GM12878 (cell line): ENCODE measurements at regions of chr21 and their contacts with region 1.

Region 1: DNA sequence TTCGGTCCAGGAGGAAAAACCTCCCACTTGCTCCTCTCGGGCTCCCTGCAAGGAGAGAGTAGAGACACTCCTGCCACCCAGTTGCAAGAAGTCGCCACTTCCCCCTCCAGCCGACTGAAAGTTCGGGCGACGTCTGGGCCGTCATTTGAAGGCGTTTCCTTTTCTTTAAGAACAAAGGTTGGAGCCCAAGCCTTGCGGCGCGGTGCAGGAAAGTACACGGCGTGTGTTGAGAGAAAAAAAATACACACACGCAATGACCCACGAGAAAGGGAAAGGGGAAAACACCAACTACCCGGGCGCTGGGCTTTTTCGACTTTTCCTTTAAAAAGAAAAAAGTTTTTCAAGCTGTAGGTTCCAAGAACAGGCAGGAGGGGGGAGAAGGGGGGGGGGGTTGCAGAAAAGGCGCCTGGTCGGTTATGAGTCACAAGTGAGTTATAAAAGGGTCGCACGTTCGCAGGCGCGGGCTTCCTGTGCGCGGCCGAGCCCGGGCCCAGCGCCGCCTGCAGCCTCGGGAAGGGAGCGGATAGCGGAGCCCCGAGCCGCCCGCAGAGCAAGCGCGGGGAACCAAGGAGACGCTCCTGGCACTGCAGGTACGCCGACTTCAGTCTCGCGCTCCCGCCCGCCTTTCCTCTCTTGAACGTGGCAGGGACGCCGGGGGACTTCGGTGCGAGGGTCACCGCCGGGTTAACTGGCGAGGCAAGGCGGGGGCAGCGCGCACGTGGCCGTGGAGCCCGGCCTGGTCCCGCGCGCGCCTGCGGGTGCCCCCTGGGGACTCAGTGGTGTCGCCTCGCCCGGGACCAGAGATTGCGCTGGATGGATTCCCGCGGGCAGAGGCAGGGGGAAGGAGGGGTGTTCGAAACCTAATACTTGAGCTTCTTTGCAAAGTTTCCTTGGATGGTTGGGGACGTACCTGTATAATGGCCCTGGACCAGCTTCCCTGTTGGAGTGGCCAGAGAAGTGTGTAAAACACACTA is 45.3 kb downstream of the MRPL39 start:
- DNase-seq: peak; percentile 66
- ATAC-seq: peak; percentile 57
- H3K4me3 ChIP-seq: peak overlapping the region; percentile 87
- H3K27ac ChIP-seq: peak overlapping the region; percentile 92
- H3K4me1 ChIP-seq: peaks cover 10% of the 10 kb centered on the region
- H3K27me3 ChIP-seq: no peaks in the 10 kb centered on the region
- CTCF ChIP-seq: peak in 1 of 3 experiments; percentile 10; a peak in 2 of 6 replicates
- EP300 ChIP-seq: 0 out of 4 replicates have a peak, but pooled peaks have one; percentile 6 to 10
- POLR2A ChIP-seq: peak; percentile 96
- RAD21 ChIP-seq: peak; percentile 49

Region 2: GRCh38 chr21:25176637-25177412 is 385.1 kb before region 1 on chr21:
- CTCF ChIA-PET with region 1: no interaction called
- POLR2A ChIA-PET with region 1: no interaction called
- RAD21 ChIA-PET with region 1: no interaction called
- SMC1A ChIA-PET with region 1: no interaction called
- in situ Hi-C with region 1: no loop called
- intact Hi-C with region 1: loop called (anchors 10 kb)
- DNase-seq: peak; percentile 87
- ATAC-seq: peak; percentile 92
- H3K4me3 ChIP-seq: no peak overlapping the region
- H3K27ac ChIP-seq: peak overlapping the region; percentile 58; the same call in 1 of the 2 replicates
- H3K4me1 ChIP-seq: peaks cover 12% of the 10 kb centered on the region
- H3K27me3 ChIP-seq: no peaks in the 10 kb centered on the region
- CTCF ChIP-seq: no peak
- EP300 ChIP-seq: peak; percentile 95 to 97
- POLR2A ChIP-seq: no peak
- RAD21 ChIP-seq: no peak

Region 3: GRCh38 chr21:25457411-25457810 is 104.5 kb before region 1 on chr21:
- CTCF ChIA-PET with region 1: interaction called, 5 read pairs
- POLR2A ChIA-PET with region 1: interaction called, 4 read pairs
- RAD21 ChIA-PET with region 1: interaction called, 6 read pairs
- SMC1A ChIA-PET with region 1: interaction called, 8 read pairs
- in situ Hi-C with region 1: no loop called
- intact Hi-C with region 1: loop called (anchors 1 kb)
- DNase-seq: peak; percentile 83
- ATAC-seq: peak; percentile 60
- H3K4me3 ChIP-seq: no peak overlapping the region
- H3K27ac ChIP-seq: peak overlapping the region; percentile 98
- H3K4me1 ChIP-seq: peaks cover 52% of the 10 kb centered on the region
- H3K27me3 ChIP-seq: no peaks in the 10 kb centered on the region
- CTCF ChIP-seq: no peak
- EP300 ChIP-seq: peak; percentile 100
- POLR2A ChIP-seq: no peak
- RAD21 ChIP-seq: peak; percentile 25; the same call in 1 of the 2 replicates

Region 4: DNA sequence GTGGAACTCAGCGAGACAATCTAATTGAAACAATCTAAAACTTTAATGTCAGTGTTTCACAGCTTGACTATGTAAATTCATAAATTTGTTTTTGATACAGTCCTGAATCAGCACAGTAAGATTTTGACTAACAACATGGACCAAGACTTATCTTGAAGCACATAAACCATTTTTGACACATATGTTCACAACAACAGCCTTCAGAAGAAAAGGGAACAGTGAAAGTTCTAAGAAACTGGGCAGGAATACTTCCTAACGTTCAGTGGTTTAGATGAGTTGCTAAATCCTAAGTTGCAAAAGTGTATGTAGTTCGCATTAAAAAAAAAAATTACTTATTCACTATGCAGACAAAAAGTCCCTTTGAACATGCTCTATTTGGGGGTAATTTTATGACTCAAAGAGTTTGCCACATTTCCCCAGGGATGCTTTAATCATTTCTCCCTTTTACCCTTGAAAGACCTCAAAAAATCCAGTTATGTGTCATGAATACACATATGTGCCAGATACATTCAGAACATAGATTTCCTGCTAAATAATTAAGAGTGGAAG is 74.8 kb before region 1 on chr21:
- CTCF ChIA-PET with region 1: interaction called, 4 read pairs
- POLR2A ChIA-PET with region 1: interaction called, 3 read pairs
- RAD21 ChIA-PET with region 1: interaction called, 12 read pairs
- SMC1A ChIA-PET with region 1: interaction called, 17 read pairs
- in situ Hi-C with region 1: no loop called
- intact Hi-C with region 1: loop called (anchors 1 kb)
- DNase-seq: peak; percentile 96
- ATAC-seq: peak; percentile 80
- H3K4me3 ChIP-seq: peak overlapping the region; percentile 11
- H3K27ac ChIP-seq: peak overlapping the region; percentile 85
- H3K4me1 ChIP-seq: peaks cover 46% of the 10 kb centered on the region
- H3K27me3 ChIP-seq: no peaks in the 10 kb centered on the region
- CTCF ChIP-seq: no peak
- EP300 ChIP-seq: peak; percentile 97 to 98
- POLR2A ChIP-seq: no peak
- RAD21 ChIP-seq: peak; percentile 37; the same call in 1 of the 2 replicates

Region 5: GRCh38 chr21:25507522-25507921 is 54.4 kb before region 1 on chr21:
- CTCF ChIA-PET with region 1: interaction called, 4 read pairs
- POLR2A ChIA-PET with region 1: interaction called, 18 read pairs
- RAD21 ChIA-PET with region 1: interaction called, 12 read pairs
- SMC1A ChIA-PET with region 1: interaction called, 13 read pairs
- in situ Hi-C with region 1: loop called (anchors 10 kb)
- intact Hi-C with region 1: loop called (anchors 1 kb)
- DNase-seq: no peak
- ATAC-seq: peak; percentile 57
- H3K4me3 ChIP-seq: no peak overlapping the region
- H3K27ac ChIP-seq: peak overlapping the region; percentile 95
- H3K4me1 ChIP-seq: peaks cover 41% of the 10 kb centered on the region
- H3K27me3 ChIP-seq: no peaks in the 10 kb centered on the region
- CTCF ChIP-seq: peak; percentile 19 to 52 (median 31); a peak in 4 of 6 replicates
- EP300 ChIP-seq: no peak
- POLR2A ChIP-seq: no peak
- RAD21 ChIP-seq: peak; percentile 60